ENCODE measurements at regions of chr17 and their contacts with region 1.

Region 1: DNA sequence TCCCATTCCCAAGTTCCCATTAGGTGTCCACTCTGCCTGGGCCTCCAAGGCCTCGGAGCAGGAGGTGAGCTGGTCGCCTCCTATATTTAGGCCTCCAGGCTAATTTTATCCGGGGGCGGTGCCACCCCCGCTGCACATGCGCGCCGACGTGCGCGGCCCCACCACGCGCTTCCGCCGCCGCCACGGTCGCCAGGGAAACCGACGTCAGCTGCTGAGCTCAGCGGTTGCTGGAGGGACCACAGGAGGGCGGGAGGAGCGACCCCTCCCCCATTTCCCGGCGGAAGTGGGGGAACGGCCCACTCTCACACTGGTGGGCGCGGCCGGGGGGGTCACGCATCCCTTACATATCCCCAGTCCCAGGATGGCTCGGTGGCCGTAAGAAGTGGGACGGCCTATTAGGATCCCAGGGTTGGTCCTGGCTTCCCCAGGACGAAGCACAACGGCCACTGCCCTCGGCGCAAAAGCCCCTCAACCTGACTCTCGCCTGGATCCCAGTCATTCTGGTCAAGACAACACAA is 1.0 kb downstream of the PER1 start:
- DNase-seq: peak; percentile 93
- H3K4me3 ChIP-seq: peak overlapping the region; percentile 73 to 99
- H3K27ac ChIP-seq: peak overlapping the region; percentile 99 to 100
- H3K4me1 ChIP-seq: peaks cover 37% of the 10 kb centered on the region
- H3K27me3 ChIP-seq: no peaks in the 10 kb centered on the region
- CTCF ChIP-seq: peak in 1 of 3 experiments; percentile 14
- POLR2A ChIP-seq: no peak

Region 2: DNA sequence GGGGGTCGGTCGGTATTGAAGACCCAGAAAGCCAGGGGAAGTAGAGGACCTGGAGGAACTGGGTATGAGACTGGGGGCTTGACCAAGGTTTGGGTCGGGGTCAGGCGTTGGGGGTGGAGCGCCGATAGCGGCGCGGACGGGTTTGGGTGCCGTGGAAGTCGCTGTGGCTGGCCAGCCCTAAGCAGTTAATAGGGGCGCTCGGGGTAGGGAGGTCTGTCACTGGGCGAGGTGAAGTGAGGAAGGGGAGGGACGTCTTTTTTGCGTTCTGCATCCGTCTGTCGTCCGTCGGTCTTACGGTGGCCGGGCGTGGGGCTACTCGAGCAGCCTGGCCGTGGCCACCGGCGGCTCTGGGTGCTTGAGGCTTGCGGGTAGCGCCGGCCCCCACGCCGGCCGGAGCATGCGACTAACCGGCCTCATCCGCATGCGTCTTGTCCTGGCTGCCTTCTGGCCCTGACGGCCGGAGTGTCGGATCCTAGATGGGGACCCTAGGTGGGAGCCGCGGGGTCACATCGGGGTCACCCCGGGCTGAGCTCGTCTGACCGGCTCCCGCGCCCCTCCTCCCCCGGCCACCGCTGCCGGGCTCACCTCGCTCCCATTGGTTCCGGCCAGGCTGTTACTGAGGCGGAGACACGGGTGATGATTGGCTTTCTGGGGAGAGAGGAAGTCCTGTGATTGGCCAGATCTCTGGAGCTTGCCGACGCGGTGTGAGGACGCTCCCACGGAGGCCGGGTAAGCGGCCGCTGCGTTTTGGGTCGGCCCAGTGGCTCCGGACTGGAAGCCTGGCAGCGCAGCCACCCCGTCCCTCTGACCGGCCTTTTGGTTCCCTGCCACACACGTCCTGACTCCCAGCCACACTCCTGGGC is 306.7 kb before region 1 on chr17:
- intact Hi-C with region 1: loop called (anchors 5 kb)
- DNase-seq: peak; percentile 97
- H3K4me3 ChIP-seq: peak overlapping the region; percentile 77 to 97
- H3K27ac ChIP-seq: peak overlapping the region; percentile 97
- H3K4me1 ChIP-seq: peaks cover 29% of the 10 kb centered on the region
- H3K27me3 ChIP-seq: no peaks in the 10 kb centered on the region
- CTCF ChIP-seq: no peak
- POLR2A ChIP-seq: peak; percentile 31

Region 3: GRCh38 chr17:8068736-8069586 is 82.2 kb before region 1 on chr17:
- intact Hi-C with region 1: no loop called
- DNase-seq: no peak
- H3K4me3 ChIP-seq: no peak overlapping the region
- H3K27ac ChIP-seq: no peak overlapping the region
- H3K4me1 ChIP-seq: peaks cover 11% of the 10 kb centered on the region
- H3K27me3 ChIP-seq: no peaks in the 10 kb centered on the region
- CTCF ChIP-seq: no peak
- POLR2A ChIP-seq: no peak